ENCODE measurements at regions of chr11 and their contacts with region 1.

Region 1: DNA sequence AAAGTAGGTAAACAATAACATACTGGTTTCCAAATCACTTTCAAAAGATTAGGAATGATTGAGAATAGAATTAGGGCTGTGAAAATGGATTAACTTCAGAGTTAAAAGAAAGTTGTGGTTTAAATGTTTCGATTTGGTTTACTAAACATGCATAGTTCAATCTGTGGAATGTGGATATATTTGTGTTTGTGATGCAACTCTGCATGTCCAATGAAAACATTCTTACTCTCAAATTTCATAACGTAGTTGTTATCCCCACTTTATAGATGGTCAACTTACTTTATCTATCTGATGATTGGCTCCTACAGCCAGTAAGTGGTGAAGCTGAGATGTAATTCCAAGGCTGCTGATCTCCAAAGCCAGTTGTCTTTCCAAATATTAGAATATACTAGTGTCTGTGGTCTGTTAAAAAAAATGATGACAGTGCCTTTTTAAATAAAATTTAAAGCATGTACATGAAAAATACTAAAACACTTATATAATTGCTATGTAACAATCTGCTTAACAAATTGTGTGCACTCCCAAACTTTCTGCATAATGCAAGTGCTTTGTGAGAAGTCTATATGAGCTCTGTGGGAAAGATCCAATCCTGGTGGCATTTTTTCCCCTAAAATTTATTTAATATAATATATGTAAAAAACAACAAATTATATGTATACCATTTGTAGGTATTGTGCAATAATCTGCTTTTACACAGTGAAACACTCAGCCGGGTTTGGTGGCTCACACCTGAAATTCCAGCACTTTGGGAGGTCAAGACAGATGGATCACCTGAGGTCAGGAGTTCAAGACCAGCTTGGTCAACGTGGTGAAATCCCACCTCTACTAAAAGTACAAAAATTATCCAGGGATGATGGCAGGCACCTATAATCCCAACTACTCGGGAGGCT is 9.7 kb upstream of the SIK3 start:
- DNase-seq: no peak
- H3K4me3 ChIP-seq: no peak overlapping the region
- H3K27ac ChIP-seq: no peak overlapping the region
- H3K4me1 ChIP-seq: no peaks in the 10 kb centered on the region
- H3K27me3 ChIP-seq: no peaks in the 10 kb centered on the region
- CTCF ChIP-seq: no peak

Region 2: GRCh38 chr11:116454020-116454645 is 653.8 kb before region 1 on chr11:
- CTCF ChIA-PET with region 1: no interaction called
- dilution Hi-C with region 1: no loop called
- in situ Hi-C with region 1: no loop called
- intact Hi-C with region 1: loop called (anchors 10 kb)
- DNase-seq: peak; percentile 17
- H3K4me3 ChIP-seq: no peak overlapping the region
- H3K27ac ChIP-seq: no peak overlapping the region
- H3K4me1 ChIP-seq: no peaks in the 10 kb centered on the region
- H3K27me3 ChIP-seq: no peaks in the 10 kb centered on the region
- CTCF ChIP-seq: peak; percentile 64 to 79

Region 3: DNA sequence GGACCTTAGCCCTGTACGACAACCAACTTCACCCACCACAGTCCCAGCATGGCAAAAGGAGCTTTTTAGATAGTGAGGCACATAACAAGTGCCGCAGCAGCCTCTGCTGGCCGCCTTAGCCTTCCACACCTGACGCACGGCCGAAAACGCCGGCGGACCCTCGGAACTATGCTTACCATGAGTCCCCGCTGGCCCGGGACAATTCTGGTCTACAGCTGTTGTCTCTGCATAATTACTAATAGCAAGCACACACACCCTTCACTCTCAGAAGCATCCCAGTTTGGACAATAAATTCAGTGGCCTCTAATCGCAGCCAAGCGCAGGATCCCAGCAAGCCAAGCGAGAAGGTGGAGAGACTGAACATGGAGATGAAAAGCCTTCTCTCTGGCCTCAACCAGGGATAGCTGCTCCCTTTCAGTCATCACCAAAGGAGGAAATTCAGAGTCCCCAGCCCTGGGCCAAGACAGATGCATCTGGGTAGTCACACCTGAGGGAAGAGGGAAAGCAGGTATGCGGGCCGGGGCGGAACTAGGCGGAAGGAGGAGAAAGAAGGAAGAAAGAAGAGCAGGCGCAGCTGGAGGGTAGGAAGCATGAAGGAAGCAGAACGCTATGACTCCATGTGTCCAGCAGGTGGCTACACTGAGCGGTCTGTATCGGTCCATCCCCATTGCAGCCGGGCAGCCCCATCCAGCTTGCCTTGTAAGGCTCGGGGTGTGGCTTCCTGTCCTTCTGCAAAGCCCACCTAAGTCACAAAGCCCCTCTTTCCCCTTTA is 375.5 kb before region 1 on chr11:
- CTCF ChIA-PET with region 1: no interaction called
- dilution Hi-C with region 1: no loop called
- in situ Hi-C with region 1: no loop called
- intact Hi-C with region 1: loop called (anchors 1 kb)
- DNase-seq: peak; percentile 40
- H3K4me3 ChIP-seq: no peak overlapping the region
- H3K27ac ChIP-seq: no peak overlapping the region
- H3K4me1 ChIP-seq: no peaks in the 10 kb centered on the region
- H3K27me3 ChIP-seq: peaks cover 4% of the 10 kb centered on the region
- CTCF ChIP-seq: peak; percentile 84 to 88

Region 4: GRCh38 chr11:116787786-116788486 is 320.0 kb before region 1 on chr11 and contains the start of gene ZPR1:
- CTCF ChIA-PET with region 1: no interaction called
- dilution Hi-C with region 1: loop called (anchors 25 kb)
- in situ Hi-C with region 1: loop called (anchors 5 kb)
- intact Hi-C with region 1: loop called (anchors 1 kb)
- DNase-seq: peak; percentile 55
- H3K4me3 ChIP-seq: peak within 1 kb of the TSS; percentile 61 to 83 (median 81)
- H3K27ac ChIP-seq: peak within 1 kb of the TSS; percentile 75
- H3K4me1 ChIP-seq: peaks cover 14% of the 10 kb centered on the region
- H3K27me3 ChIP-seq: no peaks in the 10 kb centered on the region
- CTCF ChIP-seq: no peak
- total RNA-seq, gene ZPR1: 35.7 to 67.9 TPM

Region 5: DNA sequence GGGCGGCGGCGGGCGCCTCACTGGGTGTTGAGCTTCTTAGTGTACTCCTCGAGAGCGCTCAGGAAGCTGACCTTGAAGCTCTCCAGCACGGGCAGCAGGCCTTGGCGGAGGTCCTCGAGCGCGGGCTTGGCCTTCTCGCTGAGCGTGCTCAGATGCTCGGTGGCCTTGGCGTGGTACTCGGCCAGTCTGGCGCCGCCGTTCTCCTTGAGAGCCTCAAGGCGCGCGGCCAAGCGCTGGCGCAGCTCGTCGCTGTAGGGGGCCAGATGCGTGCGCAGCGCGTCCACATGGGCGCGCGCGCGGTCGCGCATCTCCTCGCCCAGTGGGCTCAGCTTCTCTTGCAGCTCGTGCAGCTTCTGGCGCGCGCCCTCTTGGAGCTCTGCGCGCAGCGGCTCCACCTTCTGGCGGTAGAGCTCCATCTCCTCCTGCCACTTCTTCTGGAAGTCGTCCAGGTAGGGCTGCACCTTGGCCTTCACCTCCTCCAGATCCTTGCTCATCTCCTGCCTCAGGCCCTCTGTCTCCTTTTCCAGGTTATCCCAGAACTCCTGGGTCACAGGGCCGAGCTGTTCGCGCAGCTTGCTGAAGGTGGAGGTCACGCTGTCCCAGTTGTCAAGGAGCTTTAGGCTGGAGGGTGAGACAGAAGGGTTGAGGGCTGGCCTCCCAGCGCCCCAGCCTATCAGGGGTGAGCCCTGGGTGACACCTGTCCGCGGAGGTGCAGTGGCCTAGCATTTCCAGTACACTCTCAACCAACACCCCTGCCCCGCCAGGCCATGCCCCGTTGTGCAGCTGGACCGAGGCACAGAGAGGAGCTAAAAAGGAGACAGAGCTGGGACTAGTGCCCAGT is 271.9 kb before region 1 on chr11:
- CTCF ChIA-PET with region 1: interaction called, 3 read pairs
- dilution Hi-C with region 1: no loop called
- in situ Hi-C with region 1: no loop called
- intact Hi-C with region 1: loop called (anchors 1 kb)
- DNase-seq: peak; percentile 85
- H3K4me3 ChIP-seq: peak overlapping the region in 2 of 3 experiments; percentile 34 to 51
- H3K27ac ChIP-seq: no peak overlapping the region
- H3K4me1 ChIP-seq: peaks cover 8% of the 10 kb centered on the region
- H3K27me3 ChIP-seq: no peaks in the 10 kb centered on the region
- CTCF ChIP-seq: peak; percentile 58 to 74

Region 6: DNA sequence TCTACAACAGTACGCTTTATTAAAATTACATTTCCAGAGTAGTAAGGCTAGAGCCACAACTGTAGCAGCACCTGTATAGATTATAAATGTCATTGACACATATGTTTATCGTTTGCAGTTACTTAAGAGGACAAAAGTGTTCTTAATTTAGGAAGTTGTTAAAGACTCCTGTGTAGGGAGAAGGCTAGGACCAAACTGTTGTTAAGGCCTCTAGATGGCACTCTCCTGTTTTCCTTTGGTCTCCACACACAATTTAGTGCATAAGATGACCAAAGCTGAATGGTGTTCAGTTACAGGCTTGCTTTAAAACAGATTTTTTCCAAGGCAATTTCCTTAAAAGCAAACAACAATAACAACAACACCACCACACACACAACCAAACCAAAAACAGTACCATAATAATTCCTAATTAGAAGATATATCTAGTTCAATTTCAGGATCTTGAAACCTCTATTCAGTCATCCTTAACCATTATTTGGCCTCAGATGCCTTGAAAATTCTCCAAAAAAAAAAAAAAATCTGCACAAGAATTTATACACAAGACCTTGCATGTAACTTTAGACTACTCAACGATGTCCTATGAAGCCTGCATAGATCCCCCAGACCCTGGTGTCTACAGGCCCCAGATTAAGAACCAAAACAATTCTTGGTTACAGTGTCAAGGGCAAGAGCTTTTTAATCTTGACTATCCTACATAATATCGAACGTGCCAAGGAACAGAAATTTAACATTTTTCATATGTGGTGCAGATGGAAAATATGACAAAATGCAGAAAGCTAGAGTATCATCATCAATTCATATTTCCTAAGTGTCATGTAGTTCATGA is 227.9 kb before region 1 on chr11:
- CTCF ChIA-PET with region 1: no interaction called
- dilution Hi-C with region 1: no loop called
- in situ Hi-C with region 1: loop called in 1 of 2 experiments (anchors 10 kb)
- intact Hi-C with region 1: loop called (anchors 1 kb)
- DNase-seq: peak; percentile 58
- H3K4me3 ChIP-seq: no peak overlapping the region
- H3K27ac ChIP-seq: no peak overlapping the region
- H3K4me1 ChIP-seq: peaks cover 16% of the 10 kb centered on the region
- H3K27me3 ChIP-seq: no peaks in the 10 kb centered on the region
- CTCF ChIP-seq: peak; percentile 78 to 86

Region 7: GRCh38 chr11:117058761-117059261 is 49.1 kb before region 1 on chr11:
- CTCF ChIA-PET with region 1: no interaction called
- dilution Hi-C with region 1: no loop called
- in situ Hi-C with region 1: no loop called
- intact Hi-C with region 1: no loop called
- DNase-seq: no peak
- H3K4me3 ChIP-seq: no peak overlapping the region
- H3K27ac ChIP-seq: no peak overlapping the region
- H3K4me1 ChIP-seq: peaks cover under 1% of the 10 kb centered on the region
- H3K27me3 ChIP-seq: no peaks in the 10 kb centered on the region
- CTCF ChIP-seq: no peak

Region 8: DNA sequence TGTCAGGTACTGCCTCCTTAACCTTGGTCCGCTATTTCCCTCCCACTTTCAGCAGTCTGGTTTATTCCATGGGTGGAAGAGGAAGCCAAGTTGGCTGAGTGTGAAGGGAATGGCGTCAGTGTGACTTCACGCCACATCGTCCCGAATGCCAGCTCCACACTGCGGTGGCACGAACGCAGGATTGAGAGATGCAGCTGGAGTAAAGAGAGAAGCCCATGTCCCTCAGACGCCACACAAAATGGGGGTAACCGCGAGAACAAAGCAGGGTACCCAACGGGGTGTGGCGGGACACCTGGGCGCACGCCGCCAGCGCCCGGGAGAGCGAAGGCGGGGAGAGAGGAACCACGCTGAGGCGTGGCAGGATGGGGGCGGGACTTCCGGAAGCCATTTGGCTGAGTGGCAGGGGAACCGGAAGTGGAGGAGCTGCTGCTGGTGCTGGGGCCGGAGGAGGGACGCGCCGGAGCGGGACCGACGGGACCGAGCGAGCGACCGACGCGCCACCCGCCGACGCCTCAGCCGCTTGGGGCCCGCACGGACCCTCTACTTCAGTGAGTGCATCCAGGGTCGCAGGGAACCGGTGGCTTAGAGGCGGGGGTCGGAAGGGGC is 36.0 kb after region 1 on chr11 and contains the start of gene PAFAH1B2:
- CTCF ChIA-PET with region 1: no interaction called
- dilution Hi-C with region 1: no loop called
- in situ Hi-C with region 1: no loop called
- intact Hi-C with region 1: loop called (anchors 5 kb)
- DNase-seq: peak; percentile 92
- H3K4me3 ChIP-seq: peak within 1 kb of the TSS; percentile 60 to 82 (median 66)
- H3K27ac ChIP-seq: peak within 1 kb of the TSS; percentile 88
- H3K4me1 ChIP-seq: peaks cover 8% of the 10 kb centered on the region
- H3K27me3 ChIP-seq: no peaks in the 10 kb centered on the region
- CTCF ChIP-seq: no peak
- total RNA-seq, gene PAFAH1B2: 129 to 177 TPM

Region 9: DNA sequence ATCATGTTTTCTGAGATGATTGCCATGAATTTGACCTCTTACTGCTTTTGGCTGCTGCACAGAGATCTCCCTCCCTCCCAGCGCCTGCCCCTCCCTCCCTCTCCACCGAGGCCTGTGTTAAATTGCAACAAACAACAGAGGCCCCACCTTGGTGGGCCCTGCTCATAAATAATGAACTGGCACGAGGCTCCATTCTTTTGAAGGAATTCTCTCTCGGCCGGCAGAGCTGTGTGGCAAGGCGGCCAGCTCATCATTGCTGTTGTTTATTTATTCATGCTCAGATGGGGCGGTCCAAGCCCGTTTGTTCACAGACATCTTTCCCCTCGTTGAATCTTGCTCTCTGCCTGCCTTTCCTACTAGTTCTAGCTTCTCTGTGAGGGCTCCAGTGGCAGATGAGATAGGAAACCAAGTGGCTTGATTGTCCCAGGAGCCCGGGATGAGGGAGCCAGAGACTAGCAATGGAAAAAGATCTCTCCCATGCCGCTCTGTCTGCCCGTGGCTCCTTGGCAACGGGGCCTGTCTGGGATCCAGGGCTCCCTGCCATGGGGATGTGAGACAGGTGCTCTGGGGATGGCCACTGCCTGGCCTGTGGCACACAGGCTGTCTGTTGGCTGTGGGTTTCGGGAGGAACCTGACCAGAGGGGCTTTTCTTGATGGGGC is 496.5 kb after region 1 on chr11:
- CTCF ChIA-PET with region 1: no interaction called
- dilution Hi-C with region 1: no loop called
- in situ Hi-C with region 1: no loop called
- intact Hi-C with region 1: no loop called
- DNase-seq: no peak
- H3K4me3 ChIP-seq: no peak overlapping the region
- H3K27ac ChIP-seq: no peak overlapping the region
- H3K4me1 ChIP-seq: no peaks in the 10 kb centered on the region
- H3K27me3 ChIP-seq: no peaks in the 10 kb centered on the region
- CTCF ChIP-seq: no peak

Measured in mammary epithelial cell (primary cell).